ENCODE measurements at regions of chr15 and their contacts with region 1.

Region 1: DNA sequence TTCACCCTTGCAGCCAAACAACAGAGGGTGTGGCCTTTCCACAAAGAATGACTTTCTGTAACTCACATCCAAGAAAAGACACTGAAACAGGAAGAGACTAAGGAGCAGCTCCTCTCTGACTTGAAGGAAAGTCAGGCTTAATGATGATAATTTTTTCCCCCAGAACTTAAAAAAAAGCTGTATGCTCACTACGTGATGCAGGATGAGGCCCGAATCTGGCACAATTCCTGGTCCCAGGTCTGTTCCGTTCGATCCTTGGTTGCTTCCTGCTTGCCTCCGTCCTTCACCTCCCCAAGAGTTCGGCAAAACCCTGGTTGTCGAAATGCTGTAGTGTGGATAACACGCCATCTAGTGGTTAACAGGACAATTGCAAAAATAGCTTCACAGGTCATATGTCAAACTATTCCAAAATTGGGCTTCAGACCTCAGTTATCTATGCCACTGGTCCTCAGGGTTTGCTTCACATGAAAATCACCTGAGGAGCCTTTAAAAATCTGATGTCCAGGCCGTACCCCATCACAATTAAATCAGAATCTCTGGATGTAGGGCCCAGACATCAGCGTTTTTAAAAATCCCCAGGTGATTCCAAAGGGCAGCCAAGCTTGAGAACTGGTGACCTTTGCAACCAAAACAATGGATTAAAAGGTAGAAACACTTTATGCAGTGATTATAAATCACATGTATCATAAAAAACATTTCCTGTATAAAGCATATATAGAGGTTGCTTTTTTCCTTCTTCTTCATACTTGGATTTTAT is 28.1 kb upstream of the SYNM start:
- DNase-seq: peak; percentile 42 to 62 (median 62)
- H3K4me3 ChIP-seq: peak overlapping the region; percentile 23 to 71 (median 64)
- H3K4me3 Mint-ChIP-seq: peak overlapping the region; percentile 78 to 95
- H3K27ac ChIP-seq: no peak overlapping the region
- H3K27ac Mint-ChIP-seq: peak overlapping the region in 3 of 7 donors; percentile 65 to 70 (median 66)
- H3K4me1 ChIP-seq: peaks cover 0 to 4% of the 10 kb centered on the region in 2 donors
- H3K4me1 Mint-ChIP-seq: peaks cover 3% of the 10 kb centered on the region
- H3K27me3 ChIP-seq: no peaks in the 10 kb centered on the region
- H3K27me3 Mint-ChIP-seq: peaks cover 4 to 9% (median 4%) of the 10 kb centered on the region in 3 donors
- CTCF ChIP-seq: peak; percentile 84

Region 2: DNA sequence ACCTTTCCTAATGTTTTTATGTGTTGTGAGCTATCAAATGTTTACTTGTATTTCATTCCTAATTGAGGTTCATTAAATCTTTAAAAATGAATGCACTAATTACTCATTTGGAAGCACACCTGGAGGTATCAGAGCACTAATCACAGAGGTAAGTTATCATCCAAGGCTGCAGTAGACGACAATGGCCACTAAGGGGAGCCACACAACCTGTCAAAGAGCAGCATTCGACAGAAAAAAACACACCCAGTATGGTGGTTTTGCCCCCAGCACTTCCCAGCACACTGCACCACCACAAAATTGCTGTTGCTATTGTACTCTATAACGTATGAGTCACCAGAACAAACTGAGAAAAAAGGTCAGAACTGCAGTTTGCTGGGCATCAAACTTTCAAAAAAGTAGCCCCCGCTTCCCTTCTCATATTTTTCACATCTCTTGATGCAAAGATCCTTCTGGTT is 634.3 kb before region 1 on chr15:
- intact Hi-C with region 1: loop called in 1 of 2 experiments (anchors 10 kb)
- DNase-seq: peak; percentile 11 to 30 (median 13)
- H3K4me3 ChIP-seq: no peak overlapping the region
- H3K4me3 Mint-ChIP-seq: no peak overlapping the region
- H3K27ac ChIP-seq: no peak overlapping the region
- H3K27ac Mint-ChIP-seq: no peak overlapping the region
- H3K4me1 ChIP-seq: no peaks in the 10 kb centered on the region
- H3K4me1 Mint-ChIP-seq: peaks cover 2% of the 10 kb centered on the region
- H3K27me3 ChIP-seq: no peaks in the 10 kb centered on the region
- H3K27me3 Mint-ChIP-seq: peaks cover 1 to 8% (median 4%) of the 10 kb centered on the region in 3 donors
- CTCF ChIP-seq: peak; percentile 80

Region 3: GRCh38 chr15:98983333-98983732 is 93.4 kb before region 1 on chr15:
- intact Hi-C with region 1: no loop called
- DNase-seq: peak; percentile 42 to 58 (median 47)
- H3K4me3 ChIP-seq: no peak overlapping the region
- H3K4me3 Mint-ChIP-seq: no peak overlapping the region
- H3K27ac ChIP-seq: no peak overlapping the region
- H3K27ac Mint-ChIP-seq: peak overlapping the region in 2 of 7 donors; percentile 40 to 50
- H3K4me1 ChIP-seq: peaks cover 17 to 18% of the 10 kb centered on the region in 2 donors
- H3K4me1 Mint-ChIP-seq: peaks cover 31% of the 10 kb centered on the region
- H3K27me3 ChIP-seq: no peaks in the 10 kb centered on the region
- H3K27me3 Mint-ChIP-seq: peaks cover 0 to 3% (median 2%) of the 10 kb centered on the region in 3 donors
- CTCF ChIP-seq: no peak